A673 (cell line): ENCODE measurements at regions of chr10 and their contacts with region 1.

Region 1: DNA sequence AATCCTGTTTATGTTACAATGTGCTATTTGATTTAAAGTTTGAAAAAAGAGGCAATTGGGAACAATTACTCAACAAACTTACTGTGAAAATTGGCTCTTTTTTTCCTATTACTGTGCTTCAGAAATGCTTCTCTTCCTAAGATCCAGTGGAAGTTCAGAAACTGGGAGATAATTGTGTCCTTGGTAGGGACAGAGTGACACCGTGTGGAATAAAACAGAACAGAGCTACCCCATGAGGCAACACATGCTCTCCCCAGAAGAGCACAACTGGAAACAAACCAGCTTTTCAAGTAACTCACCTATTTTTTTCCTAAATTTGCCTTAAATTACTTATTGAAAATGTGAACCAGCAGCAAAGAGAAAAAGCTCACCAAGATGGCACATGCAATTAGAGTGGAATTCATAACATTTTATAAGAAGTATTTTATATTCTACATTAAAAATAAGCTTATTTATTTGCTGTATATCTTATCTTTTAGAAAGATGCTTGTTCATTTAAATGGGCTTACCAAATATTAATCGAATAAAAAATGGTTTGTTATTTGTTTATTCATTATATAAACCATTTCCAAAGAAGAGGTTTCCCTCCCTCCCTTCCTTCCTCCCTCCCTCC is 346.1 kb upstream of the ANKRD30A start:
- DNase-seq: peak; percentile 87
- H3K4me3 ChIP-seq: no peak overlapping the region
- H3K27ac ChIP-seq: no peak overlapping the region
- H3K4me1 ChIP-seq: peaks cover 23% of the 10 kb centered on the region
- H3K27me3 ChIP-seq: no peaks in the 10 kb centered on the region
- CTCF ChIP-seq: peak; percentile 84

Region 2: DNA sequence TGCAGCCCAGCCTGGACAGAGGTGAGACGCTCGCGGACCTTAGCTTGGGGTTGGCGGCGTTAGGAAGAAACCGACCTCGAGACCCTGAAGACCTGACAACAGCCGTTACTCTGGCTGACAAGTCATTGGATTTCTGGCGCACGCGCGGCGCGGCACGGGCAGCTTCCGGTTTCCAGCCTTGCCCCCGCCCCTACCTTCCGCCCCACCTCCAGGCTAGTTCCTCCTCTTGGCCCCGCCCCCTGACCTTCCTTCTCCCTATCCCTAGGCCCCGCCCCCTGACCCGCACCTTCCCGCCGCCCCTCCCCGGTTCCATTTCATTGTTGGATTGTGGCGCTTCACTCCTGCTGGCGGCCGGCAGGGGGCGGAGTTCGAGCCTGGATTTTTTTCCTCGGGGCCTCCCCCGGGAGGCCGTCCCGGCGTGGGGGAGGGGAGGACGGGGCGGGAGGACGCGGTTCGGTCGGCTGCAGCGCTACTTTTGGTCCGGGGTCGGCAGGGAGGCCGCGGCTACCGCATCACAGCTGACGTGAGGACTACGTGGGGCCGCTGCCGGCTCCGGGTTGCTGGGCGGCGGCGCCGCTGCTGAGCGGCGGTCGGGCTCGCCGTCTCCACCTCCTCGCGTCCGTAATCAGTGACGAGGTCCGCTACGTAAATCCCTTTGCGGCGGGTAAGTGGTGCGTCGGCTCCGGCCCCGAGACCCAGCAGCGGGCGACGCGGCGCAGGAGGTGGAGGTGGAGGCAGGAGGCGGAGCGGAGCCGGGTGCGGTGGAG is 1652.6 kb before region 1 on chr10 and contains the start of gene CREM:
- CTCF ChIA-PET with region 1: no interaction called
- POLR2A ChIA-PET with region 1: no interaction called
- intact Hi-C with region 1: loop called (anchors 2 kb)
- DNase-seq: peak; percentile 98
- H3K4me3 ChIP-seq: peak within 1 kb of the TSS; percentile 97
- H3K27ac ChIP-seq: peak within 1 kb of the TSS; percentile 100
- H3K4me1 ChIP-seq: peaks cover 29% of the 10 kb centered on the region
- H3K27me3 ChIP-seq: no peaks in the 10 kb centered on the region
- CTCF ChIP-seq: peak; percentile 96
- total RNA-seq, gene CREM: 58.4 and 66.3 TPM in 2 replicates

Region 3: DNA sequence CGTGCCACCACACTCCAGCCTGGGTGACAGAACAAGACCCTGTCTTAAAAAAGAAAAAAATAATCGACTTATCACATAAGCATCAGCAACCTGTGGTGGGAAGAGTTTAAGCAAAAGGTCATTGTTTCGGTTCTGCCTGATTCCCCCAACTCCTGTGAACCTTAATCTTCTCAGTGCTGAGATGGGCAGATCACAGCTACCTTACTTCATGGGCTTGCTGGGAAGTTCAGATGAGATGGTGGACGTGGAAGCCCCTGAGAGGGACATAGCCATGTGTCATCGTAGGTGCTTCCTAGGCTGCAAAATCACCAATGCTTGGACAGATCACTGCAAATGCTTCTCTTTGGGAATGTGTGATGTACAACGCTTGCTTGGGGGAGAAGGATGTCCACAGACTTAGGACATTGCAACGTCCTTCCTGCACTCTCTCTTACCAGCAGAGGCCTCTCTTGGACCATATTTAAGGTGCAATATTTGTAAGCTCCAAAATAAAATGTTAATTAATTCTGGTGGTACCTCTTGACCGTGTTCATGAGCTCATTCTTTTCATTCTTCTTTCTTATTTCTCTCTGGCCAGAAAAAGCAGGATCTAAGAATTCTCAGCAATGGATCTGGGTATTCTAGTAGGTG is 1165.6 kb before region 1 on chr10:
- CTCF ChIA-PET with region 1: interaction called, 12 read pairs
- POLR2A ChIA-PET with region 1: no interaction called
- intact Hi-C with region 1: no loop called
- DNase-seq: peak; percentile 66
- H3K4me3 ChIP-seq: no peak overlapping the region
- H3K27ac ChIP-seq: no peak overlapping the region
- H3K4me1 ChIP-seq: peaks cover 3% of the 10 kb centered on the region
- H3K27me3 ChIP-seq: no peaks in the 10 kb centered on the region
- CTCF ChIP-seq: peak; percentile 63

Region 4: GRCh38 chr10:35640951-35641675 is 1138.2 kb before region 1 on chr10:
- CTCF ChIA-PET with region 1: interaction called, 22 read pairs
- POLR2A ChIA-PET with region 1: interaction called, 4 read pairs
- intact Hi-C with region 1: loop called (anchors 1 kb)
- DNase-seq: peak; percentile 94
- H3K4me3 ChIP-seq: peak overlapping the region; percentile 88
- H3K27ac ChIP-seq: peak overlapping the region; percentile 84
- H3K4me1 ChIP-seq: peaks cover 28% of the 10 kb centered on the region
- H3K27me3 ChIP-seq: no peaks in the 10 kb centered on the region
- CTCF ChIP-seq: 0 out of 2 replicates have a peak, but pooled peaks have one; percentile 10

Region 5: GRCh38 chr10:36634916-36635315 is 144.4 kb before region 1 on chr10:
- CTCF ChIA-PET with region 1: no interaction called
- POLR2A ChIA-PET with region 1: no interaction called
- intact Hi-C with region 1: loop called (anchors 5 kb)
- DNase-seq: peak; percentile 95
- H3K4me3 ChIP-seq: peak overlapping the region; percentile 8
- H3K27ac ChIP-seq: peak overlapping the region; percentile 97
- H3K4me1 ChIP-seq: peaks cover 55% of the 10 kb centered on the region
- H3K27me3 ChIP-seq: no peaks in the 10 kb centered on the region
- CTCF ChIP-seq: no peak

Region 6: DNA sequence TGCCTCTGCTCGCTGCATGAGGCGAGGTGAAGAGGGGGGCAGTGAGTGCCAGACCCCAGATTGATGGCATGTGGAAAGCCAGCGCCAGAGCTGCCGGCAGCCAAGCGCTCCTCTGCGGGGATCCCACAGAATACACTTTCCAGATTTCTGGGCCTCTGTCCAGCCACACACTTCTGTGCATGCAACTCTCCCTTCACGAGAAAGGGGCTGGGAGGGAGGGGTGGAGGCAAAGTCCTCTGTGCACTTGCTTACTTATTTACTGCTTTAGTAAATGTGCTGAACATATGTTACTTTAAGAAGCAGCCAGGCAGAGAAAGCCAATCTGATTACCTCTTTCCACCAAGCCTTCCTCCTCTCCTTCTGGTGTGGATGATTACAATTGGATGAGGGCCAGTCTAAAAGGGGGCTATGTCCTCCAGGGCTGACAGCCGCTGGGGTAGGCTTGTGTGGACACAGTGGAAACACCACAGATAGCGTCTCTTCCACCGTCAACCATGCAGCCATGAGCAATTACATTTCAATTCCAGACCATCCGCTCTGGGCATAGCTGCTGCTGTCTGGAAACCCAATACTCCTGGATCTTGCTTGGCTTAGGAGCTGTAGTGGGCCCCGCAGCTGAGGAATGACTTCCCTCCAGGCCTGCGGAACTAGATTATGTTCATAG is 23.3 kb after region 1 on chr10:
- CTCF ChIA-PET with region 1: no interaction called
- POLR2A ChIA-PET with region 1: interaction called, 33 read pairs
- intact Hi-C with region 1: no loop called
- DNase-seq: peak; percentile 43
- H3K4me3 ChIP-seq: no peak overlapping the region
- H3K27ac ChIP-seq: peak overlapping the region; percentile 10
- H3K4me1 ChIP-seq: peaks cover 7% of the 10 kb centered on the region
- H3K27me3 ChIP-seq: no peaks in the 10 kb centered on the region
- CTCF ChIP-seq: no peak